ENCODE measurements at regions of chr16 and their contacts with region 1.

Region 1: DNA sequence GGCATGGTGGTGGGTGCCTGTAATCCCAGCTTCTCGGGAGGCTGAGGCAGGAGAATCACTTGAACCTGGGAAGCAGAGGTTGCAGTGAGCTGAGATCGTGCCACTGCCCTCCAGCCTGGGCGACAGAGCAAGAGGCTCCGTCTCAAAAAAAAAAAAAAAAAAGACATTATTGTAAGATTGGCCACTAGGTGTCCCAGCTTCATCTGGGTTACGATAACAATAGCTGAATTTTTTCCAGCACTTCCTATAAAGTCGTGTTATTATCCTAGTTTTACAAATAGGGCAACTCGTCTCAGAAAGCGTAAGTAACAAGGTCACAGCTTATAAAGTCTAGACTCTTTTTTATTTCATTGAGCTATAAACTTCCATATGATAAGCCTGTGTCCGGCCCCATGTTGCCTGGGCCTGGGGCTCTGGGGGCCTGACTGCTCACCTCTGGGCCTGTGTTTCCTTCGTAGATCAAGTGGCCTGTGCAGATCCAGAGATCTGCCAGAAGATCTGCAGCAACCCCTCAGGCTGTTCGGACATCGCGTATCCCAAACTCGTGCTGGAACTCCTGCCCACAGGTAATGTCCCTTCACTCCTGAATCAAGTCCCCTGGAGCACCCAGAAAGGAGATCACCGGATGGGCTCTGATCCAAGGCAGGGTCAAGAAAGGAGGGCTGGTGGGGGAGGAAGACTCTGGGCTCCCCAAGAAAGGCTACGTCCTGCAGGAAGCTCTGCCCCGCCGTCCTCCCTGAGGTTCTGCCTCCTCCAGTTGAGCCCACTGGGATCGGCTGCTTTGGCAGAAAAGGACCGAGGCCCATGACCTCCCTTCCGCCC is 60.6 kb downstream of the SLC5A11 start:
- DNase-seq: no peak
- H3K4me3 ChIP-seq: no peak overlapping the region
- H3K27ac ChIP-seq: no peak overlapping the region
- H3K27me3 ChIP-seq: no peaks in the 10 kb centered on the region
- CTCF ChIP-seq: peak; percentile 46; the same call in 1 of the 2 replicates

Region 2: GRCh38 chr16:24471561-24472350 is 434.7 kb before region 1 on chr16:
- CTCF ChIA-PET with region 1: no interaction called
- POLR2A ChIA-PET with region 1: no interaction called
- DNase-seq: no peak
- H3K4me3 ChIP-seq: no peak overlapping the region
- H3K27ac ChIP-seq: no peak overlapping the region
- H3K27me3 ChIP-seq: no peaks in the 10 kb centered on the region
- CTCF ChIP-seq: no peak

Region 3: GRCh38 chr16:24863582-24864437 is 42.6 kb before region 1 on chr16:
- CTCF ChIA-PET with region 1: interaction called, 10 read pairs
- POLR2A ChIA-PET with region 1: no interaction called
- DNase-seq: no peak
- H3K4me3 ChIP-seq: no peak overlapping the region
- H3K27ac ChIP-seq: no peak overlapping the region
- H3K27me3 ChIP-seq: peaks cover 3% of the 10 kb centered on the region
- CTCF ChIP-seq: no peak

Region 4: GRCh38 chr16:24887472-24887871 is 18.9 kb before region 1 on chr16:
- CTCF ChIA-PET with region 1: interaction called, 10 read pairs
- POLR2A ChIA-PET with region 1: no interaction called
- DNase-seq: no peak
- H3K4me3 ChIP-seq: no peak overlapping the region
- H3K27ac ChIP-seq: no peak overlapping the region
- H3K27me3 ChIP-seq: no peaks in the 10 kb centered on the region
- CTCF ChIP-seq: no peak

Region 5: DNA sequence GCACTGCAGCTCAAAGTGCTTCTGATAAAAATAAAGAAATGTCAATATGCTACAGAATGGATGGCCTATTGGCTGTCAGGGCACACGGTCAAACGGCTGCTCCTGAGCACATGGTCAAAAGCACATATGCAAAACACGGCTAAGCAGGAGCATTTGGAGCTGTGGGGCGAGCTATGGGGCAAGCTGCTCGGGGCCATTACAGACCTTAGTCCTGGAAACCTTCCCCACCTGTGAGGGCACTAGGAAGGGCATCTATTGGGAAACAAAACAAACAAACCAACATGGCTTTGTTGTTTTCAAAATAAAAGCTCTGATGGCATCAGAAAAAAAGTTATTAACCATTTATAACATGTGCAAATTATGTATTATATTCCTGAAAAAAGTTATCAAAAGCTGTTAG is 23.0 kb after region 1 on chr16:
- CTCF ChIA-PET with region 1: interaction called, 12 read pairs
- POLR2A ChIA-PET with region 1: no interaction called
- DNase-seq: no peak
- H3K4me3 ChIP-seq: no peak overlapping the region
- H3K27ac ChIP-seq: no peak overlapping the region
- H3K27me3 ChIP-seq: no peaks in the 10 kb centered on the region
- CTCF ChIP-seq: no peak

Measured in AG04450 (cell line).